Naive thymus-derived CD4-positive, alpha-beta T cell (primary cell): ENCODE measurements at regions of chr6 and their contacts with region 1.

Region 1: DNA sequence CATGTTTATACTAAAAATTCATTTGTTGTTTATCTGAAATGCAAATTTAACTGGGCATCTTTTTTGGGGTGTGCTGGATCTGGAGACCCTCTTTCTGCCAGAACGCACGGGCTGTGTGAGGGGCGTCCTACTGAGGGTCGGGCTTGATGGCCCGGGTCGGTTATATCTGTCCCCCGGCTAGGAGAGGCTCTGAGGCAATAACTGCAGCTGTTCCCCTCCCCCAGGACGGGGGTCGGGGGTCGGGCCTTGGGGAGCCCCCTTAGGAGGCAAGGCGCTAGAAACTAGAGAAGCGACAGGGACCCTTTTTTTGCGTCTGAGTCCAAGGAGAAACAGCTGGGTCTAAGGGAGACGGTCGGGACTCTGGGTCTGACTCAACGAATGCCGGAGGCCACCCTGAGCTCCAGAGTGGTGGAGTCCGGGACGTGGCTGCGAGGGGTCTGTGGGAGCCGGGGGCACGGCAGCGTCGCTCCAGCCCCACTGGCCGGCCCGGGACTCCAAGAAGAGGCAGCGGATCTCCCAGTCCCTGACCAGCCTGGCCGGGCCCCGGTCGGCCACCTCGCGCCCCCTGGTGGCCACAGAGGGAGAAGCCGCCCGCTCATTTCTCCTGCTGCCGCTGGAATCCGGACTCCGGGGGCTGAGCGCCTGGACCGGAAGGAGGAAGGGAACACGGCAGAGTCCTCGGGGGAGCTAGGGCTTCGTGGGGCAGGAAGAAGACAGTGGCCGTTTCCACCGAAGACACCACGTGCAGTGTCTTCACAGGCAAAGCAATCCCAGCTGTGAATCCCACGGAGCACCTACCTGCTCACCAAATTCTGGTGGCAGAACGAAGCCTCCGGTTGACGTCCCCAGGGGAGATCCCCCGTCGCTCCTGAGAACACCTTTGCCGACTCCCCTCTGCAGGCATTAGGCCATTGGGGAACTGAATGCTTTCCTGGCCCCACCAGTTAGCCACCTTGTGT is 24.0 kb upstream of the SCML4 start:
- DNase-seq: peak; percentile 66 to 88 (median 77)
- ATAC-seq: peak; percentile 92
- H3K4me3 ChIP-seq: peak overlapping the region; percentile 76
- H3K4me3 Mint-ChIP-seq: peak overlapping the region; percentile 73 to 91 (median 86)
- H3K27ac ChIP-seq: peak overlapping the region; percentile 67
- H3K27ac Mint-ChIP-seq: peak overlapping the region; percentile 68 to 95 (median 85)
- H3K4me1 ChIP-seq: peaks cover 0 to 21% of the 10 kb centered on the region in 2 donors
- H3K4me1 Mint-ChIP-seq: peaks cover 10 to 49% (median 26%) of the 10 kb centered on the region in 7 donors
- H3K27me3 ChIP-seq: no peaks in the 10 kb centered on the region
- H3K27me3 Mint-ChIP-seq: peaks cover 0 to 7% (median 0%) of the 10 kb centered on the region in 5 donors

Region 2: DNA sequence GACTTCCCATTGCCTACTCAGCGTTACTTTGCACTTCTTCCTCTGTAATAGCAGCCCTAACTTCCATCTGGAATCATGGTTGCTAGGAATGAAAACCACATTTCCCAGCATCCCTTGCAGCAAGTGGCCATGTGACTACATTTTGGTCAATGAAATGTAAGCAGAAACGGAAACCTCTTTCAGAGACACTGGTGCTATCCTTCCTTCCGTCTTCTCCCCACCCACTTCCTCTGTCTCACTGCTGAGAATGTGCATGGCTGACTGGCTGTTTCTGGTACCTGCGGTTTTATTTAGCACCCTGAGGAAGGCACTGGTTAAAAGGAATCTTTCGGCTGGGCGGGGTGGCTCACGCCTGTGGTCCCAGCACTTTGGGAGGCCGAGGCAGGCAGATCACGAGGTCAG is 131.4 kb before region 1 on chr6:
- CTCF ChIA-PET with region 1: interaction called, 8 read pairs
- POLR2A ChIA-PET with region 1: interaction called, 3 read pairs
- intact Hi-C with region 1: loop called in 1 of 2 experiments (anchors 5 kb)
- DNase-seq: peak; percentile 27 to 89 (median 85)
- ATAC-seq: peak; percentile 95
- H3K4me3 ChIP-seq: no peak overlapping the region
- H3K4me3 Mint-ChIP-seq: peak overlapping the region; percentile 43 to 81 (median 72)
- H3K27ac ChIP-seq: peak overlapping the region; percentile 49
- H3K27ac Mint-ChIP-seq: peak overlapping the region; percentile 82 to 97 (median 92)
- H3K4me1 ChIP-seq: peaks cover 47 to 57% of the 10 kb centered on the region in 2 donors
- H3K4me1 Mint-ChIP-seq: peaks cover 46 to 86% (median 74%) of the 10 kb centered on the region in 7 donors
- H3K27me3 ChIP-seq: no peaks in the 10 kb centered on the region
- H3K27me3 Mint-ChIP-seq: no peaks in the 10 kb centered on the region

Region 3: GRCh38 chr6:107740496-107741190 is 107.5 kb before region 1 on chr6:
- CTCF ChIA-PET with region 1: interaction called, 34 read pairs
- POLR2A ChIA-PET with region 1: interaction called, 14 read pairs
- intact Hi-C with region 1: no loop called
- DNase-seq: peak in 7 of 9 donors; percentile 35 to 48 (median 42)
- ATAC-seq: peak; percentile 43
- H3K4me3 ChIP-seq: peak overlapping the region; percentile 48
- H3K4me3 Mint-ChIP-seq: peak overlapping the region; percentile 72 to 90 (median 82)
- H3K27ac ChIP-seq: peak overlapping the region; percentile 73
- H3K27ac Mint-ChIP-seq: peak overlapping the region; percentile 85 to 98 (median 95)
- H3K4me1 ChIP-seq: peaks cover 54 to 65% of the 10 kb centered on the region in 2 donors
- H3K4me1 Mint-ChIP-seq: peaks cover 47 to 92% (median 86%) of the 10 kb centered on the region in 7 donors
- H3K27me3 ChIP-seq: no peaks in the 10 kb centered on the region
- H3K27me3 Mint-ChIP-seq: no peaks in the 10 kb centered on the region

Region 4: DNA sequence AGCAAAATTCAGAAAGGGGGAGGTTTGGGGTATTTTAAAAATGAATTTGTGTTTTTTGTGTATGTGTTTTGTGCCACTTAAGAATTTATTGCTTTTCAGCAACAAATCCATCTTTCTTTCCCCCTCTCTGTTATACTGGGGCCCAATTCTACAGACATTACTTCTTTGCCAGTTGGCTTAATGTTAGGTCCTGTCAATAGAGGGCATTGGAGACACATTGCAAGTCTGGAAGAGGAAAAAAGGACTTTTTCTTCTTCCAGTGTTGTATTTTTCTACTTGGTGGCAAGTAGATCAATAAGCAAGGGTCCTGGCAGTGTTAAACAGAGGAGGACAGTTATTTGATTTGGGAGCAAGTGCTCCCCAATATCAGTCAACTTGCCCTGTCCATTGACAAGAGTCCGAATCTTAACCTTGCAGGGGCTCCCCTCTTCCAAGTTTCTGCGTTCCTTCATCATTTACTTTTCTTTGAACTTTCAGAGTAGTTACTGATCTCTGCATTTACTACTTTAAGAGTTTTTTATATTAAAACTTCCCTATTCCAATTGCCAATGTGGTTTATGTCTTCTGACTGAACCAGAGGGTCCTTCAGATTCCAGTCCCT is 47.5 kb before region 1 on chr6:
- CTCF ChIA-PET with region 1: interaction called, 18 read pairs
- POLR2A ChIA-PET with region 1: interaction called, 6 read pairs
- intact Hi-C with region 1: loop called (anchors 1 kb)
- DNase-seq: peak in 4 of 9 donors; percentile 28 to 53 (median 42)
- ATAC-seq: peak; percentile 75
- H3K4me3 ChIP-seq: no peak overlapping the region
- H3K4me3 Mint-ChIP-seq: peak overlapping the region in 2 of 10 donors; percentile 33 to 43
- H3K27ac ChIP-seq: no peak overlapping the region
- H3K27ac Mint-ChIP-seq: peak overlapping the region in 8 of 9 donors; percentile 53 to 96 (median 90)
- H3K4me1 ChIP-seq: peaks cover 10 to 34% of the 10 kb centered on the region in 2 donors
- H3K4me1 Mint-ChIP-seq: peaks cover 17 to 87% (median 81%) of the 10 kb centered on the region in 7 donors
- H3K27me3 ChIP-seq: no peaks in the 10 kb centered on the region
- H3K27me3 Mint-ChIP-seq: peaks cover 0 to 9% (median 0%) of the 10 kb centered on the region in 5 donors

Region 5: GRCh38 chr6:107832151-107833056 is 15.7 kb before region 1 on chr6:
- CTCF ChIA-PET with region 1: interaction called, 21 read pairs
- POLR2A ChIA-PET with region 1: interaction called, 9 read pairs
- intact Hi-C with region 1: no loop called
- DNase-seq: peak in 1 of 9 donors; percentile 14
- ATAC-seq: peak; percentile 57
- H3K4me3 ChIP-seq: no peak overlapping the region
- H3K4me3 Mint-ChIP-seq: peak overlapping the region in 7 of 10 donors; percentile 5 to 56 (median 28)
- H3K27ac ChIP-seq: no peak overlapping the region
- H3K27ac Mint-ChIP-seq: peak overlapping the region; percentile 1 to 66 (median 43)
- H3K4me1 ChIP-seq: peaks cover 0 to 13% of the 10 kb centered on the region in 2 donors
- H3K4me1 Mint-ChIP-seq: peaks cover 18 to 37% (median 28%) of the 10 kb centered on the region in 7 donors
- H3K27me3 ChIP-seq: no peaks in the 10 kb centered on the region
- H3K27me3 Mint-ChIP-seq: no peaks in the 10 kb centered on the region

Region 6: GRCh38 chr6:108009894-108010293 is 161.8 kb after region 1 on chr6:
- CTCF ChIA-PET with region 1: no interaction called
- POLR2A ChIA-PET with region 1: no interaction called
- intact Hi-C with region 1: no loop called
- DNase-seq: no peak
- ATAC-seq: no peak
- H3K4me3 ChIP-seq: no peak overlapping the region
- H3K4me3 Mint-ChIP-seq: no peak overlapping the region
- H3K27ac ChIP-seq: no peak overlapping the region
- H3K27ac Mint-ChIP-seq: no peak overlapping the region
- H3K4me1 ChIP-seq: no peaks in the 10 kb centered on the region
- H3K4me1 Mint-ChIP-seq: no peaks in the 10 kb centered on the region
- H3K27me3 ChIP-seq: no peaks in the 10 kb centered on the region
- H3K27me3 Mint-ChIP-seq: peaks cover 0 to 5% (median 0%) of the 10 kb centered on the region in 5 donors